Right lobe of liver (tissue), 6 donors: ENCODE measurements at regions of chr10 and their contacts with region 1.

Region 1: DNA sequence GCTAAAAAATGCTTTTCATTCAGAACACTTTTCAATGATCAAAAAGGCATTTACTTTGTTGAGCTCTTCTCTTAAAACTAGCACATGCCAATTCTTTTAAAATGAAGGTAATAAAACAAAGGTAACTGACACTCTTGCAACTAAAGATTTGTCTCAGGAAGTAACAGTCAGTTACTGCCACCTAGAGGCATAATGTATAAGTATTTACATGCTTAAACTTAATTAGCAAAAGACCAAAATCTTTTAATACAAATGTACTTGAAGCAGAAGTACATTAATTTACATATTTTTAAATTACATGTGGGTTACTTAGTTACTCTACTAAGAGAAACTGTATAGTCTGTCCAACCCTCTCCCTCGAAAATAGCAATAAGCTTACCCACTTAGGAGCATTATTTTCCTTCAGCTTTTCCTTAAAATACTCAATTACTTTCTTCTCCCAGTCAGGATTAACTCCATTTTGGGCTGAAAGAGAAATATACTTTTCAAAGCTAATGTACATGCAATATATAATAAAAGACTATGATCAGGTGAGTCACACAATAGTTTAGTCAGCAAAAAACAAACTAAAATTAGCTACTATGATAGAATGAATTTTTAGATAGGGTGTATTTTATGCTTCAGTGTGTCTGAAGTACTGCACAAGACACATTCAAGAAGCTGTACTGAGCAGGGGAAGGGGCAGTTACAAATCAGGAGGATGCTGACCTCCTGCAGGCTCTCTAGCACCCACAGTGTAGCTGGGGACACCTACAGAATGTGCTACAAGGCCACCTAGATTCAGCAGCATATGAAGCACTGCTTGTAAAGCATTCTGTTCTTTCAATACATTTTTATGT is 13.0 kb downstream of the MCMBP start:
- DNase-seq: no peak
- ATAC-seq: peak in 3 of 4 donors; percentile 55 to 61 (median 60)
- H3K4me3 ChIP-seq: no peak overlapping the region
- H3K27ac ChIP-seq: no peak overlapping the region
- H3K4me1 ChIP-seq: peaks cover 0 to 8% (median 0%) of the 10 kb centered on the region in 4 donors
- H3K27me3 ChIP-seq: no peaks in the 10 kb centered on the region
- CTCF ChIP-seq: peak; percentile 47 to 64 (median 64)
- POLR2A ChIP-seq: no peak

Region 2: GRCh38 chr10:119686439-119687191 is 173.0 kb before region 1 on chr10:
- intact Hi-C with region 1: loop called in 1 of 2 experiments (anchors 5 kb)
- DNase-seq: peak; percentile 78 to 84 (median 83)
- ATAC-seq: peak; percentile 96 to 99 (median 97)
- H3K4me3 ChIP-seq: no peak overlapping the region
- H3K27ac ChIP-seq: peak overlapping the region in 1 of 3 donors; percentile 12
- H3K4me1 ChIP-seq: no peaks in the 10 kb centered on the region
- H3K27me3 ChIP-seq: no peaks in the 10 kb centered on the region
- CTCF ChIP-seq: peak; percentile 77 to 96 (median 94)
- POLR2A ChIP-seq: no peak